Gastrocnemius medialis (tissue), 4 donors: ENCODE measurements at regions of chr3 and their contacts with region 1.

Region 1: GRCh38 chr3:100492059-100493006 is at the start of gene TMEM45A:
- DNase-seq: peak; percentile 83 to 94
- ATAC-seq: peak; percentile 97
- H3K4me3 ChIP-seq: peak within 1 kb of the TSS; percentile 66 to 79 (median 72)
- H3K27ac ChIP-seq: peak within 1 kb of the TSS; percentile 42 to 65 (median 60)
- H3K4me1 ChIP-seq: no peaks in the 10 kb centered on the region
- H3K27me3 ChIP-seq: no peaks in the 10 kb centered on the region
- CTCF ChIP-seq: no peak
- POLR2A ChIP-seq: peak in 1 of 2 donors; percentile 59
- total RNA-seq, gene TMEM45A: 3.5 to 7.0 (median 4.1) TPM

Region 2: DNA sequence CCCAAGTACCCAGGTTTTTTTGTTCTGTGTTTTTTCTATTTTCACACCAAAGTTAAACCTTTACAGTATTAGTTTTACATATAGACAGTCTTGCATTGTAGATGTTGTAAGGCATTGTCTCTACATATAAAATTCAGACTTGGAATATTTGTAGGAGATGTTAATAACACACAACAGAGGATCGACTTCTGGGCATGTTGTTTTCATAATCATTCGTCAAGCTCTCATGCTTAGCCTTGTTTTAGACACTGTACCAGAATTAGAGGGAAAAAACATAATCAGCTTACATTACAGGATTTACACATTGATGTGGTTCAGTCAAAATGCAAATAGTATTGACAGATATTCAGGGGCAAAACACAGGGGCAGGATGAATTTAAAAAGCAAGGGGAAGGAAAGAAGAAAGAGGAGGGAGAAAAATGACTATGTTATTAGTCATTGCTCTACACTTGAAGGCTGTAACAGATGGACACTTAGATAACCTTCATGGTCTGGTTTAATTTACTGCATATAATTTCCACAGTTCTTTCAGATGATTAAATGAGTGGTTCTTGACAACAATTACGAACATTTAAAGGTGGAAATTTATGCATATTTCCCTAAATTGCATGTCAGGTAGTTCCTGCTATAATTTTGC is 667.2 kb before region 1 on chr3:
- in situ Hi-C with region 1: no loop called
- intact Hi-C with region 1: loop called (anchors 10 kb)
- DNase-seq: no peak
- ATAC-seq: peak in 1 of 2 donors; percentile 57
- H3K4me3 ChIP-seq: no peak overlapping the region
- H3K27ac ChIP-seq: peak overlapping the region in 3 of 4 donors; percentile 16 to 71 (median 58)
- H3K4me1 ChIP-seq: peaks cover 13 to 33% of the 10 kb centered on the region in 2 donors
- H3K27me3 ChIP-seq: no peaks in the 10 kb centered on the region
- CTCF ChIP-seq: no peak
- POLR2A ChIP-seq: no peak

Region 3: GRCh38 chr3:100437721-100438622 is 54.4 kb before region 1 on chr3:
- in situ Hi-C with region 1: no loop called
- intact Hi-C with region 1: no loop called
- DNase-seq: no peak
- ATAC-seq: peak in 1 of 2 donors; percentile 39
- H3K4me3 ChIP-seq: no peak overlapping the region
- H3K27ac ChIP-seq: peak overlapping the region in 1 of 4 donors; percentile 22
- H3K4me1 ChIP-seq: no peaks in the 10 kb centered on the region
- H3K27me3 ChIP-seq: no peaks in the 10 kb centered on the region
- CTCF ChIP-seq: no peak
- POLR2A ChIP-seq: no peak